Lower lobe of right lung (tissue), 2 donors: ENCODE measurements at regions of chr14 and their contacts with region 1.

Region 1: DNA sequence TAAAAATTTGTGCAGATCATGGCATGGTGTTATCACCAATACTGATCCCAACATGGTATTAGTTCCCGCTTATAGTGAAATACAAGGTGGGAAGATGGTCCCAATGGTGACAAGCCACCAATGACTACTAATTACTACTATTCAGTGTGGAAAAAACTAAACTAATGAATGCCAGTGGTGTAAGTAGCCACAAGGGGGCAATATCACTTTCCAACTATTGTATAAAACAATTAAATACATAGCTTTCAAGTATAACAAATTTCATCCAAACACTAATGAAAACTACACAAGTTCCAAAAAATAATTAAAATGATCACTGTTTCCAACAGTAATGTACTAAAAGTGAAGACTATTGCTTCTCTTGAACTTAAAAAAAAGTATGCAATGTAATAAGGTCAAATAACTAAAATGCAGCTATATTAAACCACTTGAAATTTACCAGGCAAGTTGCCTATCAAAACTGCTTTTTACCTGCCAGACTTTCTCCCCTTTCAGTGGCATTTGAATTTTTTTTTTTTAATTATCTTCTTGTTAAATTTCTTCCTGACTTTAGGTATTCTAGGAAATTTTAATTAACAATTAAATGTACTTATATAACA is 58.0 kb downstream of the PAPLN start:
- DNase-seq: no peak
- ATAC-seq: peak; percentile 59 to 64
- H3K4me3 ChIP-seq: no peak overlapping the region
- H3K27ac ChIP-seq: no peak overlapping the region
- H3K4me1 ChIP-seq: no peaks in the 10 kb centered on the region
- H3K27me3 ChIP-seq: no peaks in the 10 kb centered on the region
- CTCF ChIP-seq: peak; percentile 73

Region 2: DNA sequence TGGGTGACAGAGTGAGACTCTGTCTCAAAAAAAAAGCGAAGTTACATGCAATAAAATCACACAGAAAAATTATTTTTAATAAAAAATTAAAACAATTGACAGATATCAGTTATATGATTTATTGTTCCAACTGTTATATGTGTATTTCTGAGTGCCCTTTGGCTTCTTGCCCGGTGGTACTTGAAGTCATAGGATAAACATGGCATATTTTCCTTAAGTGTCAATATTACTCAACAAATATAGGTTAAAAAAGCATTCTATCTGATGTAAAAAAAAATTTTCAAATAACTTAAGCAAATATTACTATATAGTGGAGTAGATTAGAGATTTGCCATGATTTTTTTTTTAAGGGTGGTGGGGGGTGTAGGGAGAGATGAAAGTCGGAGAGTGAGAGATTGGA is 203.4 kb before region 1 on chr14:
- intact Hi-C with region 1: no loop called
- DNase-seq: no peak
- ATAC-seq: no peak
- H3K4me3 ChIP-seq: no peak overlapping the region
- H3K27ac ChIP-seq: no peak overlapping the region
- H3K4me1 ChIP-seq: no peaks in the 10 kb centered on the region
- H3K27me3 ChIP-seq: no peaks in the 10 kb centered on the region
- CTCF ChIP-seq: no peak

Region 3: GRCh38 chr14:73463411-73463810 is 168.1 kb after region 1 on chr14:
- intact Hi-C with region 1: loop called (anchors 10 kb)
- DNase-seq: peak; percentile 66
- ATAC-seq: peak; percentile 3 to 34
- H3K4me3 ChIP-seq: peak overlapping the region; percentile 15
- H3K27ac ChIP-seq: peak overlapping the region; percentile 74
- H3K4me1 ChIP-seq: peaks cover 88% of the 10 kb centered on the region
- H3K27me3 ChIP-seq: no peaks in the 10 kb centered on the region
- CTCF ChIP-seq: no peak

Region 4: GRCh38 chr14:73568381-73568781 is 273.1 kb after region 1 on chr14:
- intact Hi-C with region 1: no loop called
- DNase-seq: no peak
- ATAC-seq: peak in 1 of 2 donors; percentile 53
- H3K4me3 ChIP-seq: peak overlapping the region; percentile 73
- H3K27ac ChIP-seq: peak overlapping the region; percentile 94
- H3K4me1 ChIP-seq: peaks cover 36% of the 10 kb centered on the region
- H3K27me3 ChIP-seq: no peaks in the 10 kb centered on the region
- CTCF ChIP-seq: no peak